Cardiac septum (tissue), 1 donor: ENCODE measurements at regions of chr3 and their contacts with region 1.

Region 1: DNA sequence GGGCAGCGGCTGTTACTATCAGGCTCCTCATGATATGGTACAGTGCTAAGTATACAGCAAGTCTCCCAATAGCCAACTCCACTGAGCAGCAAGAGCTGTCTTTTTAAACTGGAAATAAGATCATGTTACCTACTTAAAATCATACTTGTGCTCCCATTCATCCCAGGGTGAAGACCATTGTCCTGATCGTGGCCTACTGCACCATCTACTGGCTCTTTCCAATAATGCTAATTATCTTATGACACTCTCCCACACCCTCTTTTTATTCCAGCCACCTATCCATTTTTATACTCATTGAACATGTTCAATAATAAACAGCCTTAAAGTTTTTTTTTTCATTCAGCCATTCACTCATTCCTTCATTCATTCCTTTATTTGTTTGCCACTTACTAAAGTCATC is 117.7 kb downstream of the GBE1 start:
- DNase-seq: no peak

Region 2: GRCh38 chr3:81425198-81425868 is 218.4 kb before region 1 on chr3:
- intact Hi-C with region 1: loop called (anchors 10 kb)
- DNase-seq: no peak